ENCODE measurements at regions of chr3 and their contacts with region 1.

Region 1: GRCh38 chr3:36911990-36912804 is 32.7 kb downstream of the TRANK1 start:
- DNase-seq: no peak
- ATAC-seq: peak in 2 of 8 donors; percentile 34 to 36
- H3K4me3 ChIP-seq: no peak overlapping the region
- H3K27ac ChIP-seq: peak overlapping the region in 3 of 10 donors; percentile 27 to 79 (median 33)
- H3K4me1 ChIP-seq: peaks cover 4 to 41% (median 16%) of the 10 kb centered on the region in 9 donors
- H3K27me3 ChIP-seq: no peaks in the 10 kb centered on the region
- CTCF ChIP-seq: no peak

Region 2: GRCh38 chr3:36597422-36597821 is 314.8 kb before region 1 on chr3:
- intact Hi-C with region 1: no loop called
- DNase-seq: no peak
- ATAC-seq: no peak
- H3K4me3 ChIP-seq: no peak overlapping the region
- H3K27ac ChIP-seq: no peak overlapping the region
- H3K4me1 ChIP-seq: no peaks in the 10 kb centered on the region
- H3K27me3 ChIP-seq: peaks cover 0 to 8% (median 0%) of the 10 kb centered on the region in 7 donors
- CTCF ChIP-seq: no peak

Region 3: DNA sequence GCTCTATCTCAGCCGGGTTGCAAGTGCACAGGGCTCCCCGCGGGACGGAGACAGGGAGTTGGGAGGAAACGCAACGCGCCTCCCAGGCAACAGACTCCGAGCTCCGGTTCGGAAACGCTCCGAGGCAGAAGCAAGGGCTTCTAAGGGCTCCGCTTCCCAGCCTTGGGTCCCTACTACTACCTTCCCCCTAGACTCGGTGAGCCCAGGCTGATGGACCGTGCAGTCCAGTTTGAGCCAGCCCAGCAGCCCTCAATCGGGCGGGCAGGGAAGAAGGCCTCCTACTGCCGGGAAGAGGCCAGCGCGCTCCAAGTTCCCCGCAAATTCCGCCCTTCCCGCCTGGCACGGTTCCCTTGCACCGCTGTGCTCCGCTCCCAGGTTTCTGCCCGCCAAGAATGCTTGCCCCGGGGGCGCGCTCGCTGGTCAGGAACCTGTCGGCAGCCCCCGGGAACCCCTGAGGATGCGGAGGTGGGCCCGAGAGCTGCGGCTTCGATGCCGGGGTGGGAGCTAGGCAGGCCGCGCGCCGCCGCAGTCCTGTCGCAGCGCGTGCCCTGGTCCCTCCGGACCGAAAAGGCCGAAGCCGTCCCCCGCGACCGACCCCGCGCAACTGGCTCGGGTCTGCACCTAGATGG is 31.9 kb after region 1 on chr3:
- intact Hi-C with region 1: loop called in 2 of 10 experiments (anchors 5 kb)
- DNase-seq: peak; percentile 46 to 66
- ATAC-seq: peak; percentile 63 to 86 (median 78)
- H3K4me3 ChIP-seq: peak overlapping the region; percentile 61 to 96 (median 82)
- H3K27ac ChIP-seq: peak overlapping the region; percentile 40 to 90 (median 74)
- H3K4me1 ChIP-seq: peaks cover 0 to 25% (median 14%) of the 10 kb centered on the region in 9 donors
- H3K27me3 ChIP-seq: no peaks in the 10 kb centered on the region
- CTCF ChIP-seq: peak in 3 of 9 donors; percentile 23 to 30 (median 26)